ENCODE measurements at regions of chr4 and their contacts with region 1.

Region 1: GRCh38 chr4:16794816-16795445 is 103.5 kb downstream of the LDB2 start:
- DNase-seq: no peak
- H3K4me3 ChIP-seq: no peak overlapping the region
- H3K27ac ChIP-seq: no peak overlapping the region
- H3K27me3 ChIP-seq: no peaks in the 10 kb centered on the region
- CTCF ChIP-seq: peak; percentile 87

Region 2: GRCh38 chr4:16443504-16444088 is 351.3 kb before region 1 on chr4:
- CTCF ChIA-PET with region 1: no interaction called
- POLR2A ChIA-PET with region 1: no interaction called
- DNase-seq: peak; percentile 8
- H3K4me3 ChIP-seq: no peak overlapping the region
- H3K27ac ChIP-seq: no peak overlapping the region
- H3K27me3 ChIP-seq: peaks cover 7% of the 10 kb centered on the region
- CTCF ChIP-seq: peak; percentile 75

Region 3: DNA sequence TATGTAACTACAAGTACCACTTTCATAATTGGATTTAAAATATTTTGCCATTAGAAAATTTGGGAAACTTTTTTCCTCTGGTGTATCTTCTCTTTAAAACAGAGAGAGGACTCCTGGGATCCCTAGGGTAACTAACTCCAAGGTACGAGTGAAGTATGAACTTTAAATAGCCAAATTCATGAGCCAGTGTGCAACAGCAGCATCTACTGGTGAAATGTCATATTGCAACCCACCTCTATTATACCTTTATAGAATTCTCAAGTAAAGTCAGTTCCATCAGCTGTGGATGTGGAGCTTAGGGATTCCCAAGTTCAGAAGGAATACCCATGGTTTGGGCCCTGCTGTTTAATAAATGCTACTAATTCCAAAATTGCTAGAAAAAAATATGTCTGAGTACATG is 286.0 kb before region 1 on chr4:
- CTCF ChIA-PET with region 1: no interaction called
- POLR2A ChIA-PET with region 1: no interaction called
- DNase-seq: no peak
- H3K4me3 ChIP-seq: no peak overlapping the region
- H3K27ac ChIP-seq: no peak overlapping the region
- H3K27me3 ChIP-seq: no peaks in the 10 kb centered on the region
- CTCF ChIP-seq: peak; percentile 41

Region 4: DNA sequence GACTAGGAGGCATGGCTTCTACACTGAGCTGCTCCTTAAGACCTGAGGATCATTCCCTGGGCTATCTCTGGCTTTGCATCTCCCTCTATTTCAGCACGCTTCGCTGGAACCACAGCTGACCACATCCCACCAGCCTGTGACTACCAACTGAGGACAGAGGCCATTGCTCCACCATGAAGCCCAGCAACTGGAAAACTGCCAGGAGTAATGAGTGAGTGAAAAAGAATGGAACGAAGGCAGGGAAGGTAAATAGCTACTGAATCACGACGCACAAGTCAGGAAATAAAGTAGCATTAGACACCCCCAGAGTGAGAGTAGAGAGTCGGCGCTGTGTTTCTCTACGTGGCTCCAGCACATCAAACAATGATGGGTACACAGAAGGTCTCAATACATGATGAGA is 211.2 kb before region 1 on chr4:
- CTCF ChIA-PET with region 1: no interaction called
- POLR2A ChIA-PET with region 1: no interaction called
- DNase-seq: no peak
- H3K4me3 ChIP-seq: no peak overlapping the region
- H3K27ac ChIP-seq: no peak overlapping the region
- H3K27me3 ChIP-seq: no peaks in the 10 kb centered on the region
- CTCF ChIP-seq: no peak

Region 5: GRCh38 chr4:16807355-16807754 is 12.4 kb after region 1 on chr4:
- CTCF ChIA-PET with region 1: interaction called, 12 read pairs
- POLR2A ChIA-PET with region 1: no interaction called
- DNase-seq: no peak
- H3K4me3 ChIP-seq: no peak overlapping the region
- H3K27ac ChIP-seq: no peak overlapping the region
- H3K27me3 ChIP-seq: no peaks in the 10 kb centered on the region
- CTCF ChIP-seq: no peak

Measured in AG04450 (cell line).